ENCODE measurements at regions of chr3 and their contacts with region 1.

Region 1: GRCh38 chr3:66938338-66938963 is 59.7 kb upstream of the KBTBD8 start:
- DNase-seq: peak; percentile 39
- ATAC-seq: peak; percentile 95
- H3K4me3 Mint-ChIP-seq: no peak overlapping the region
- H3K27ac Mint-ChIP-seq: no peak overlapping the region
- H3K4me1 Mint-ChIP-seq: peaks cover 48% of the 10 kb centered on the region
- H3K27me3 Mint-ChIP-seq: no peaks in the 10 kb centered on the region
- CTCF ChIP-seq: peak; percentile 64

Region 2: GRCh38 chr3:66912306-66912705 is 26.1 kb before region 1 on chr3:
- CTCF ChIA-PET with region 1: no interaction called
- POLR2A ChIA-PET with region 1: no interaction called
- DNase-seq: no peak
- ATAC-seq: no peak
- H3K4me3 Mint-ChIP-seq: no peak overlapping the region
- H3K27ac Mint-ChIP-seq: no peak overlapping the region
- H3K4me1 Mint-ChIP-seq: no peaks in the 10 kb centered on the region
- H3K27me3 Mint-ChIP-seq: no peaks in the 10 kb centered on the region; the same call in 1 of the 2 replicates
- CTCF ChIP-seq: no peak

Region 3: DNA sequence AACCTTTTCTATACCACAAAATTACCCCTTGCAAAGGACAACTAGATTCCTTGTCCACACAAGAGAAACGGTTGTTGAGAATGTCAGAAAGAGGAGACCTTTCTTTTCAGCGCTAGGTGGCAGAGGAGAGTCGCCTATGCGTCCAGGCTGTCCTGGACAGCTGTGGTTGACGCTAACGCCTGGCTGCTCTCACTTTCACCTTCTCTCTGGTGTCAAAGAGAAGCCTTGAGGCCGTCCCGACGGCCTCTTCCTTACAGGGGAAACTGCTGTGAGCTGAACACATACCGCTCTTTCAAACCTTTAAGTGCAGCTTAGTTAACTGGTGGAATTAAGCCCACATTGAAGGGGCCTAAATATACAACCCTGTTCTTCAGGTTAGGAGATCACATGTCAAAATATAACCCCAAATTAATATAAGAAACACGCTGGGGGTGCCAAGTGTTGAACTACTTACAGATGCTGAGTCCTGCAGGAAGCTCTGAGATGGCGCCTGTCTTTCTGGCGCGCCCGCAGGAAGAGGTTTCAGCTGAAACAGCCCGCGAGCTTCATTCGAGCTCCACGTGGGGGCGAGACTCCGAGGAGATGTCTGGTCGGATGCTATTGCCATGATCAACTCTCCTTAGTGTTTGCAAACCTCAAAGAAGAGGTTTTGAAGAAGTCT is 33.6 kb after region 1 on chr3:
- CTCF ChIA-PET with region 1: interaction called, 56 read pairs
- POLR2A ChIA-PET with region 1: no interaction called
- DNase-seq: peak; percentile 81
- ATAC-seq: peak; percentile 97
- H3K4me3 Mint-ChIP-seq: peak overlapping the region; percentile 36
- H3K27ac Mint-ChIP-seq: no peak overlapping the region; the same call in 1 of the 2 replicates
- H3K4me1 Mint-ChIP-seq: peaks cover 27% of the 10 kb centered on the region
- H3K27me3 Mint-ChIP-seq: peaks cover 12% of the 10 kb centered on the region
- CTCF ChIP-seq: peak; percentile 66

Region 4: DNA sequence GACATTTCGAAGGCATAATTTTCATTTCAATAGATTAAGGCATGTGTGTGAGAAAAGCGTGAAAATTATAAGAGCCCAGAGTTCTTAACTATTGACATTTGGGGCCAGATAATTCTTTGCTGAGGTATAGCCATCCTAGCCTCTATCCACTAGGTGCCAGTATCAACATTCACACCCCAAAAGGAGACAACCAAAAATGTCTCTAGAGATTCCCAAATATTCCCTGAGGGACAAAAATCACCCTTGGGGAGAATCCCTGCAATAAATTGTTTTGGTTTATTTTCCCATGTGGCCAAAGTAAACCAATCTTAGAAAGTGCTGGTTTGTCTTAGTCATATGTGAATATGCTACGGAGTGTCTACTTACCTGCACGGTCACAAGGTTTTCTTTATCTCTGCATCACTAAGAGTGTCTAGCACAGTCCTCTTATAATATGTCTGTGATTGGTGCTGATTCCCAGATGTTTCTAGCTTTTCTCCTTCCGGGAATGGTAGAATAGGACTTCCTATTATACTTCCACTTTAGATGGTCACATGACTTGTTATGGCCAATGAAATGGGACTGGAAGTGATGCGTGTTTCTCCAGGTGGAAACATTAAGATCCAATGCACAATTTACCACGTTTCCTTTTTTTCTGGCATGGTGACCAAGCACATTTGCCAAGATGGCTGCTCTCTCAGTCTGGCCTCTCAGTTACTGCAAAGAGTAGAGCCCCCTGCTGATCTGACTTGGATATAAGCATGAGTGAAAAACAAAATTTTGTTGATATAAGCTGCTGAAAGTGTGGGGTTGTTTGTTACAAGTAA is 51.6 kb after region 1 on chr3:
- CTCF ChIA-PET with region 1: interaction called, 31 read pairs
- POLR2A ChIA-PET with region 1: no interaction called
- DNase-seq: no peak
- ATAC-seq: no peak
- H3K4me3 Mint-ChIP-seq: peak overlapping the region; percentile 50
- H3K27ac Mint-ChIP-seq: peak overlapping the region; percentile 99
- H3K4me1 Mint-ChIP-seq: peaks cover 24% of the 10 kb centered on the region
- H3K27me3 Mint-ChIP-seq: 0 out of 2 replicates have a peak, but pooled peaks cover 4% of the 10 kb centered on the region
- CTCF ChIP-seq: no peak

Region 5: DNA sequence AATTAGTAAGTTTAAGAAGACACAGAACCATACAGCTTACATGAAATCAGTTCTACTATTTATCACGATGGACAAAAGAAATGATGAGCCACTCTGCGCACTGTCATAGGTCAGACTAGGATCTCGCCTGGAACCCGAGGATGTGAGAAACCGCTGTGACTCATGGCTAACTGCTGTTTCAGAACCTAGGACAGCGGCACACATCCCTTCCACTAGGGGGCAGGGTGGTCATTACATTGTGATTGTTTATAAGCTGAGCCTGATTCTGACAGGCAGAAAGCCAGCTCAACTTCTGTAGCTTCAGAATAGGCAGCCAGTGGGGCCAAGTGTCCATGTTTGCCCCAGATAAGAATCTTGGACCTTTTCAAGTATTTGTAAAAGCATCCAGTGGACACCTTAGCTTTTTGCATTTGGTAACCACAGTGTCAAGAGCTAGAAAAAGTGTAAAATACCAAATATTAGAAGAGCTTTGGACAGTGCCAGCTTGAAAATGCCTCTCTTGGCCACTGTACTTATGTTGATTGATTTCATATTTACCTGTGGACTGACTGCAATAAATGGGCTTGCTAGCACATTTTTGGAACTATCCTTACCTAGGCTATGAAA is 175.5 kb after region 1 on chr3:
- CTCF ChIA-PET with region 1: interaction called, 34 read pairs
- POLR2A ChIA-PET with region 1: no interaction called
- DNase-seq: peak; percentile 88
- ATAC-seq: peak; percentile 95
- H3K4me3 Mint-ChIP-seq: no peak overlapping the region
- H3K27ac Mint-ChIP-seq: no peak overlapping the region
- H3K4me1 Mint-ChIP-seq: peaks cover 12% of the 10 kb centered on the region
- H3K27me3 Mint-ChIP-seq: no peaks in the 10 kb centered on the region
- CTCF ChIP-seq: peak; percentile 91